Left ventricle myocardium inferior (tissue), 1 donor: ENCODE measurements at regions of chr3 and their contacts with region 1.

Region 1: GRCh38 chr3:32018757-32019564 is 37.4 kb downstream of the ZNF860 start:
- DNase-seq: no peak
- H3K4me3 ChIP-seq: no peak overlapping the region
- H3K27ac ChIP-seq: no peak overlapping the region
- H3K4me1 ChIP-seq: no peaks in the 10 kb centered on the region
- H3K27me3 ChIP-seq: no peaks in the 10 kb centered on the region
- CTCF ChIP-seq: peak; percentile 78

Region 2: DNA sequence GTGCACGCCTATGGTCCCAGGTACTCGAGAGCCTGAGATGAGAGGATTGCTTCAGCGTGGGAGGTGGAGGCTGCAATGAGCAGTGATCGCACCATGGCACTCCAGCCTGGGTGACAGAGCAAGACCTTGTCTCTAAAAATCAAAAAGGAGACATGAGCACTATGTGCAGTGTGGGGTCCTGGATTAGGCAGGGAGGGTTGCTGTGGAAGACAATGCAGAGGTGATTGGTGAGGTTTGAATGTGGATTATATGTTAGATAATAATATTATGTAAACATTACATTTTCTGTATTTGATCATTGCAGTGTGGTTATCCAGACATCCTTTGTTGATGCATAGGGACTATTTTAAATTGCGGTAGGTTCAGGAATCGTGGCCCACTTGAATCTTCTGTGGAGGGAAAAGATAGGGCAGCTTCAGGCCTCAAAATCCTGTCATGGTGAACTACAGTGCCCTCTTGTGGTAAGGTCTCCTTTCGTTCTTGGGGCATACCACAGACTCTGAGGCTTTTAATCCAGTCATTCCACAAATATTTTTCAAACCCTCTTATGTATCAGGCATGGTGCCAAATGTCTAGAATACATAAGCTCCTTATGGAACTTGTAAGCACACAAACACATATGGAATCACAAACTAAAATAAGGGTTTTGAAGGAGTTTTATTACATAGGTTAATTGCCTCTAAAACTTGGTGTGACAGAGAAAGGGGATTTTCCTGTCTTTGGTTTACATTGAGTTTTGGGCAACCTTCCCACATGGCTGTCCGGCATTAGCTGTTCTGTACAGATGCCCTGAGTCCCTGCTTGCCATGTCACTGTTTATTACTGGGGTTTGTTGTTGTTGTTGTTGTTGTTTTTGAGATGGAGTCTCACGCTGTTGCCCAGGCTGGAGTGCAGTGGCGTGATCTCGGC is 125.1 kb after region 1 on chr3:
- intact Hi-C with region 1: loop called (anchors 2 kb)
- DNase-seq: no peak
- H3K4me3 ChIP-seq: no peak overlapping the region
- H3K27ac ChIP-seq: no peak overlapping the region
- H3K4me1 ChIP-seq: peaks cover 43% of the 10 kb centered on the region
- H3K27me3 ChIP-seq: no peaks in the 10 kb centered on the region
- CTCF ChIP-seq: peak; percentile 84

Region 3: DNA sequence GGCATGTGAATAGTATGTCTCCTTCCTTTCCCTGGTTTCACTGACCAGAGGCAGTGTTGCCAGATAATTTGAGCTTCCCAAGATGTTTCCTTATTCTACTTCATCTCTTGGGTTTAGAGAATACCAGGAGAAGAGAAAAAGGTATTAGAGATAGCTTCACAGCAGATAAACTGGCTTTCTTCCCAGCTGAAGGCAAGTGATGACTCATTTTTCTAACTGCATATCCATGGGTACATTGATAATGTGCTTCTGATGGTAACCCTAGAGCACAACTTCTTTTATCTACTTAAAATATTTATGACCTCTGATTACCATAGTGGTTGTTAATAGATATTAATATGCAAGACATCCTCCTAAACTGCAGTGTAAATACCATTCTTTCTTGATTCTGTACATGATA is 184.9 kb after region 1 on chr3:
- intact Hi-C with region 1: no loop called
- DNase-seq: no peak
- H3K4me3 ChIP-seq: no peak overlapping the region
- H3K27ac ChIP-seq: no peak overlapping the region
- H3K4me1 ChIP-seq: peaks cover 67% of the 10 kb centered on the region
- H3K27me3 ChIP-seq: no peaks in the 10 kb centered on the region
- CTCF ChIP-seq: no peak